ENCODE measurements at regions of chr10 and their contacts with region 1.

Region 1: DNA sequence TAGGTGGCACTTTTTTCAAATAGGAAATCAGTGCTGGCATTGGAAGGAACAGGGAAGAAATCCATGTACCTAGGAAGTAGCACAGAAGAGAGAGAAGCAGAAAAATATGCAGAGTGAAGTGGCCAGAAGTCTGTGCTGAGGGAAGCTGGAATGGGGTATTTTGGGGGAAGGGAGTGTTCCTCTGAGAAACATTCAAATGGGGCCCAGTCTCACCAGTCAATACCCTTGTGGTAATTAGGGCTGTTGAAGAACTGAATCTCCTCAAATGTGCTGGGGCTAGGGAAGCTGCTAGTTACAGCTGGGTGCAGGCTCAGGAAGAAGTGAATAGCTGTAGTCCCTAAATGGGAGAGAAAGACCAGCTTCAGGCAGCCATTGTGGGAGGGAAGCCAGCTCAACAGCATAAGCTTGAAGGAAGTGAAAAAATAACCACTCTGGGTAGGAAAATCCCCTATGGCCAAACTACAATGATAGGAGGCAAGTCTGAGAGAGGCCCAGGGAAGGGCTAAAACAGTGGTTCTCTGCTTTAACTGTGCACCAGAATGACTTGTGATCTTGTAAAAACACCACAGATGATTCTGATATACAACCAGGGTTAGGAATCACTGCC is 7.6 kb downstream of the NDST2 start:
- DNase-seq: no peak
- H3K4me3 Mint-ChIP-seq: no peak overlapping the region
- H3K27ac Mint-ChIP-seq: peak overlapping the region; percentile 47
- H3K4me1 Mint-ChIP-seq: peaks cover 37% of the 10 kb centered on the region
- H3K27me3 Mint-ChIP-seq: no peaks in the 10 kb centered on the region

Region 2: GRCh38 chr10:73785221-73785720 is 18.5 kb before region 1 on chr10 and contains the start of gene ZSWIM8:
- CTCF ChIA-PET with region 1: interaction called, 10 read pairs
- POLR2A ChIA-PET with region 1: no interaction called
- DNase-seq: peak; percentile 89
- H3K4me3 Mint-ChIP-seq: peak within 1 kb of the TSS; percentile 82
- H3K27ac Mint-ChIP-seq: peak within 1 kb of the TSS; percentile 98
- H3K4me1 Mint-ChIP-seq: peaks cover 55% of the 10 kb centered on the region
- H3K27me3 Mint-ChIP-seq: no peaks in the 10 kb centered on the region
- total RNA-seq, gene ZSWIM8: 79.2 to 87.3 TPM

Region 3: DNA sequence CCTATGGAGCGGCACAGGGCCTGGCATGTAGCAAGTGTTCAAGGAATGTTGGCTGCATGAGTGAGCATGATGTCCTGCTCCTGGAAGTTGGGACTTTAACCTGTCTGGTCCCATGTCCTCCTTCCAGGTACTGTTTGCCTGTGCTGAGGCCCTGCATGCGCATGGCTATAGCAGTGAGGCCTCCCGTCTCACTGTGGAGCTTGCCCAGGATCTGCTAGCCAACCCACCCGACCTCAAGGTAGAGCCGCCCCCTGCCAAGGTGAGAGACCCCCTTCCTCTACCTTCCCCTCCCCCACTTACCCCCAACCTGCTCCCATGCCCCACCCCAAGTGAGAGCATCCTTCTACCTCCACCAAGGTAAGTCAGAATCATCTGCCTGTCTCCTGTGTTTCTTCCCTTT is 10.3 kb before region 1 on chr10:
- CTCF ChIA-PET with region 1: interaction called, 20 read pairs
- POLR2A ChIA-PET with region 1: no interaction called
- DNase-seq: no peak
- H3K4me3 Mint-ChIP-seq: no peak overlapping the region
- H3K27ac Mint-ChIP-seq: no peak overlapping the region
- H3K4me1 Mint-ChIP-seq: no peaks in the 10 kb centered on the region
- H3K27me3 Mint-ChIP-seq: no peaks in the 10 kb centered on the region

Measured in activated CD4-positive, alpha-beta T cell treated with anti-CD3 and anti-CD28 coated beads, Interleukin-2, amount 10 ng/mL, durations not matched to agents 7 days and 5 days (primary cell).